Heart left ventricle (tissue), 16 donors: ENCODE measurements at regions of chr1 and their contacts with region 1.

Region 1: GRCh38 chr1:43706598-43707495 is 489 bp upstream of the ST3GAL3 start:
- DNase-seq: peak; percentile 92 to 95 (median 94)
- ATAC-seq: peak; percentile 97 to 99 (median 98)
- H3K4me3 ChIP-seq: peak overlapping the region; percentile 71 to 95 (median 86)
- H3K27ac ChIP-seq: peak overlapping the region in 10 of 12 donors; percentile 74 to 90 (median 84)
- H3K4me1 ChIP-seq: peaks cover 0 to 42% (median 17%) of the 10 kb centered on the region in 12 donors
- H3K27me3 ChIP-seq: no peaks in the 10 kb centered on the region
- CTCF ChIP-seq: no peak
- POLR2A ChIP-seq: peak in 1 of 2 donors; percentile 58

Region 2: DNA sequence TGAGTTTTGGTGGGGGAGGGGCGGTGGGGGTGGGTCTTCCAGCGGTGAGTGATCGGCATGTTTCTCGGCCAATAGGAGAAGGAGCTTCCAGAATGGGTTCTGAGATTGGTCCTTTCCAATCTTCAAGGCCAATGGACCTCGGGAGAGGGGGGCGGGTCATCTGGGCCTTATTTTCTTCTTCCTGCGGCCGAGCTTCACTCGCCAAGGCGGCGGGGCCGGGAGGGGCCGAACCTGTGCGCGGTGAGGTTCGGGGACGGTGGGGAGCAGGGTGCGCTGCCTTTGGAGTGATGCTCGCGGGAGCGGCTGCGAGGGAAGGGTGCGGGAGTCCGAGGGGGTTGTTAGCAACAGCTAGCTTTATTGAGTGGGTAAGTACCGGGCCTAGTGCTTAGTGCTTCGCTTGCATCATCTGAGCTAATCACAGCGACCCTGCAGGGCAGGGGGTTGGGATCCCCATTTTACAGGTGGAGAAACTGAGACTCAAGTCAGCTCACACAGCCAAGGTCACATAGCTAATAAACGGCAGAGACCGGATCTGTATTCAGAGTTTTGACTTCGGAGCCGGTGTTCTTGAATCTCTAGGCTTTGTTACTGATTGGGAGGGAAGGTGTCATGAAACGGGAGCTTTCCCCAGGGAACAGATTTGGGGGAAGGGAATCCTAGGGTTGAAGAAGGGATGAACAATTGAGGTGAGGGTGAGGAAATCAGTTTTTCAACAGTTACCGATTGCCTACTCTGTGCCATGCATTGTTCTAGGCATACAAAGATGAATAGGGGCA is 56.3 kb before region 1 on chr1:
- intact Hi-C with region 1: loop called in 3 of 10 experiments (anchors 2 to 5 kb)
- DNase-seq: peak; percentile 94 to 97 (median 97)
- ATAC-seq: peak; percentile 86 to 92 (median 92)
- H3K4me3 ChIP-seq: peak overlapping the region; percentile 65 to 92 (median 82)
- H3K27ac ChIP-seq: peak overlapping the region in 11 of 12 donors; percentile 87 to 97 (median 94)
- H3K4me1 ChIP-seq: peaks cover 8 to 35% (median 15%) of the 10 kb centered on the region in 12 donors
- H3K27me3 ChIP-seq: no peaks in the 10 kb centered on the region
- CTCF ChIP-seq: no peak
- POLR2A ChIP-seq: peak; percentile 89 to 97

Region 3: GRCh38 chr1:44021581-44022321 is 314.9 kb after region 1 on chr1:
- intact Hi-C with region 1: no loop called
- DNase-seq: peak in 4 of 5 donors; percentile 36 to 50 (median 39)
- ATAC-seq: peak; percentile 57 to 65 (median 62)
- H3K4me3 ChIP-seq: no peak overlapping the region
- H3K27ac ChIP-seq: peak overlapping the region in 5 of 12 donors; percentile 17 to 54 (median 38)
- H3K4me1 ChIP-seq: peaks cover 0 to 8% (median 0%) of the 10 kb centered on the region in 12 donors
- H3K27me3 ChIP-seq: no peaks in the 10 kb centered on the region
- CTCF ChIP-seq: peak in 3 of 12 donors; percentile 27 to 32 (median 31)
- POLR2A ChIP-seq: no peak